ENCODE measurements at regions of chr1 and their contacts with region 1.

Region 1: GRCh38 chr1:171644805-171645483 is 7.5 kb downstream of the MYOC start:
- DNase-seq: peak; percentile 86
- ATAC-seq: peak; percentile 85
- H3K4me3 Mint-ChIP-seq: no peak overlapping the region
- H3K27ac Mint-ChIP-seq: no peak overlapping the region
- H3K4me1 Mint-ChIP-seq: peaks cover 10% of the 10 kb centered on the region
- H3K27me3 Mint-ChIP-seq: peaks cover 5% of the 10 kb centered on the region

Region 2: DNA sequence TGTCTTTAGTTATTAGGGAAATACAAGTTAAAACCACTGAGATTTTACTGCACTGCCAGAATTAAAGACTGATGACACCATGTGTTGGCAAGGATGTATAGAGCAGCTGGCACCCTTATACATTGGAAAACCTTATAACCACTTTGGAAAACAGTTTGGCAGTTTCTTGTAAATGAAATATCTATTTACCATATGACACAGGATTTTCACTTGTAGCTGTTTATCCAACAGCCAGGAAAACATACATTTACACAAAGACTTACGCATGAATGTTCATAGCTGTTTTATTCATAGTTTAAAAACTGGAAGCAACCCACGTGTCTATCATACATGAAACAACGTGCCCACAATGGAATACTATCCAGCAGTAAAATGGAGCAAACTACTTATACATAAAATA is 114.3 kb before region 1 on chr1:
- CTCF ChIA-PET with region 1: no interaction called
- DNase-seq: no peak
- ATAC-seq: no peak
- H3K4me3 Mint-ChIP-seq: no peak overlapping the region
- H3K27ac Mint-ChIP-seq: no peak overlapping the region
- H3K4me1 Mint-ChIP-seq: no peaks in the 10 kb centered on the region
- H3K27me3 Mint-ChIP-seq: no peaks in the 10 kb centered on the region

Region 3: GRCh38 chr1:171623651-171624331 is 21.2 kb before region 1 on chr1:
- CTCF ChIA-PET with region 1: interaction called, 10 read pairs
- DNase-seq: no peak
- ATAC-seq: no peak
- H3K4me3 Mint-ChIP-seq: no peak overlapping the region
- H3K27ac Mint-ChIP-seq: no peak overlapping the region
- H3K4me1 Mint-ChIP-seq: no peaks in the 10 kb centered on the region
- H3K27me3 Mint-ChIP-seq: peaks cover 3% of the 10 kb centered on the region

Region 4: DNA sequence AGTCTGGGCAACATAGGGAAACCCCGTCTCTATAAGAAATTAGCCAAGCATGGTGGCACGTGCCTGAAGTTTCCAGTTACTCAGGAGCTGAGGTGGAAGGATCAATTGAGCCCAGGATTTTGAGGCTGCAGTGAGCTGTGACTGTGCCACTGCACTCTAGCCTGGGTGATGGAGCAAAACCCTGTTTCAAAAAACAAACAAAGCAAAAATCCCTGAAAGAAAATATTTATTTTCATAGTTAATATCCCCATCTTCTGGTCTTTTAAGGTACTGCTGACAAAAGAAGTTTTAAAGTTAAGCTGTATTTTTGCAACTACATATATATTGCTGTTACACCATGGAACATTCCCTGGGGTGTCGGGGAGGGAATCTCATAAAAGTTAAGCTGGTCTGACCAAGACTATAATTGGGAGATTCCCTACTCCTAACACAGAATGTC is 70.9 kb after region 1 on chr1:
- CTCF ChIA-PET with region 1: interaction called, 11 read pairs
- DNase-seq: no peak
- ATAC-seq: no peak
- H3K4me3 Mint-ChIP-seq: no peak overlapping the region
- H3K27ac Mint-ChIP-seq: no peak overlapping the region
- H3K4me1 Mint-ChIP-seq: no peaks in the 10 kb centered on the region
- H3K27me3 Mint-ChIP-seq: no peaks in the 10 kb centered on the region

Region 5: DNA sequence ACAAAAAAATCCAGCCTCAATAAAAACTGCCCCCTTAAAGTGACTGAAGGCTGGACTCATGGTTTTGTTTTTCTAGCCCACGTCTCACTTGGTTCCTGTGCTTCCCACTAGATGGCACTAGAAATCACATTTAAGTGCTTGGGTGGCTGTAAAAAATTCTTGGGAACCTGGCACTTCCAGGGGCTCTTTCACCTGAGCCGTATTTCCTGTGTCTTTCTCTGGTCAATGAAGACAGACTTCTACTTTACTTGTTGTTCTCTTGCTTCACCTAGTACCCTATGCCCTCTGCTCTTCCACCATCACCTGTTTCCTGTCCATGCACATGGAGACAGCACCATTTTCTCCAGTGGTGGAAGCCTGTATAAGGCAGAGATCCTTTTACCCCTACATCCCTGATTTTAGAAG is 156.5 kb after region 1 on chr1:
- CTCF ChIA-PET with region 1: interaction called, 22 read pairs
- DNase-seq: no peak
- ATAC-seq: no peak
- H3K4me3 Mint-ChIP-seq: no peak overlapping the region
- H3K27ac Mint-ChIP-seq: peak overlapping the region; percentile 7
- H3K4me1 Mint-ChIP-seq: peaks cover 10% of the 10 kb centered on the region
- H3K27me3 Mint-ChIP-seq: no peaks in the 10 kb centered on the region

Measured in activated CD8-positive, alpha-beta memory T cell treated with anti-CD3 and anti-CD28 coated beads, Interleukin-2, amount 10 ng/mL, durations not matched to agents 7 days and 5 days (primary cell).